ENCODE measurements at regions of chr3 and their contacts with region 1.

Region 1: GRCh38 chr3:181709537-181710279 is 2.0 kb upstream of the SOX2 start:
- DNase-seq: no peak
- H3K4me3 ChIP-seq: peak overlapping the region in 3 of 4 donors; percentile 27 to 64 (median 60)
- H3K27ac ChIP-seq: peak overlapping the region in 3 of 4 donors; percentile 89 to 93 (median 90)
- H3K4me1 ChIP-seq: peaks cover 8 to 32% (median 15%) of the 10 kb centered on the region in 3 donors
- H3K27me3 ChIP-seq: peaks cover 0 to 100% (median 15%) of the 10 kb centered on the region in 4 donors
- CTCF ChIP-seq: peak; percentile 58 to 89 (median 84)
- POLR2A ChIP-seq: no peak

Region 2: GRCh38 chr3:182258538-182259177 is 549.0 kb after region 1 on chr3:
- intact Hi-C with region 1: loop called (anchors 5 kb)
- DNase-seq: no peak
- H3K4me3 ChIP-seq: no peak overlapping the region
- H3K27ac ChIP-seq: no peak overlapping the region
- H3K4me1 ChIP-seq: peaks cover 0 to 10% (median 0%) of the 10 kb centered on the region in 3 donors
- H3K27me3 ChIP-seq: peaks cover 0 to 3% (median 0%) of the 10 kb centered on the region in 4 donors
- CTCF ChIP-seq: peak in 5 of 6 experiments; percentile 45 to 72 (median 51)
- POLR2A ChIP-seq: no peak